Gastrocnemius medialis (tissue), 4 donors: ENCODE measurements at regions of chr1 and their contacts with region 1.

Region 1: DNA sequence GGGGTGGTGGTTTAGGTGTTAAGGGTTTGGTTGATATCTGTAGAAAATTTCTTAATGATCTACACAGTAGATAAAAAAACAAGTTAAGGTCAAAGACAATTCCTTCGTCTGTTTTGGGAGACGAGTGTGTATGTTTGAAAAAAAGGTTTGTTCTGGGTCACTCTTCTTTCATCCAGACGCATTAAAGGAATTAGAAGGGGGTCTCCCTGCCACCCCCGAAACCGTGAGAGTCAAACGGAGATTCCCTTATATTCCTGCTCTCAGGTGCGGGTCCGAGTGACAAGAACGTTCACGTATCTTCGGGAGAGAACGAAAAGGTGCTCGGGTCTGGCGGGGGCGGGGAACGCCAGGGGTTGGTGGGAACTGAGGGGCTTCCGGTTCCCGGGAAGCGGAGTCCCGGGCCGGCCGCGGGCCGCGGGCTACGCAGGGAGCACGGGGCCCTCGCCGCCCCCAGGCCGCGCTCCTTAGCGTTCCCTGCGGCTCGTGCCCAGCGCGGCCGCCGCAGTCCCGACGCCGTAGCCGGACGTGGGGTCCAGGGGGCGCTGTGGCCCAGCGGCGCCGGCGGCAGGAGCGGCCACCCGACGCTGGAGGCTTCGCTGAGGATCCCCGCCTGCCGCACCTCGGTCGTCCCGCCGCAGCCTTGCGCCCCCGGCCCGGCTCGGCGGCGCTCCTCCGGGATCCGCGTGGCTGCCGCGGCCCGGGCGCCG is at the start of gene ZFYVE9:
- DNase-seq: peak; percentile 32 to 59
- ATAC-seq: peak; percentile 81 to 84
- H3K4me3 ChIP-seq: peak within 1 kb of the TSS; percentile 65 to 94 (median 84)
- H3K27ac ChIP-seq: peak within 1 kb of the TSS; percentile 81 to 96 (median 93)
- H3K4me1 ChIP-seq: peaks cover 43 to 51% of the 10 kb centered on the region in 2 donors
- H3K27me3 ChIP-seq: no peaks in the 10 kb centered on the region
- CTCF ChIP-seq: peak in 4 of 5 experiments; percentile 88 to 94 (median 90)
- POLR2A ChIP-seq: peak; percentile 27 to 40
- total RNA-seq, gene ZFYVE9: 35.9 to 42.9 (median 41.9) TPM

Region 2: GRCh38 chr1:51990478-51990965 is 151.1 kb before region 1 on chr1 and contains the start of gene RAB3B:
- in situ Hi-C with region 1: no loop called
- intact Hi-C with region 1: no loop called
- DNase-seq: peak in 1 of 2 donors; percentile 12
- ATAC-seq: no peak
- H3K4me3 ChIP-seq: peak within 1 kb of the TSS in 3 of 4 donors; percentile 36 to 50 (median 37)
- H3K27ac ChIP-seq: no peak within 1 kb of the TSS
- H3K4me1 ChIP-seq: no peaks in the 10 kb centered on the region
- H3K27me3 ChIP-seq: peaks cover 38 to 42% (median 40%) of the 10 kb centered on the region in 3 donors
- CTCF ChIP-seq: no peak
- POLR2A ChIP-seq: no peak
- total RNA-seq, gene RAB3B: 0.02 to 0.04 TPM in 2 of 4 donors, not detected in the others

Region 3: DNA sequence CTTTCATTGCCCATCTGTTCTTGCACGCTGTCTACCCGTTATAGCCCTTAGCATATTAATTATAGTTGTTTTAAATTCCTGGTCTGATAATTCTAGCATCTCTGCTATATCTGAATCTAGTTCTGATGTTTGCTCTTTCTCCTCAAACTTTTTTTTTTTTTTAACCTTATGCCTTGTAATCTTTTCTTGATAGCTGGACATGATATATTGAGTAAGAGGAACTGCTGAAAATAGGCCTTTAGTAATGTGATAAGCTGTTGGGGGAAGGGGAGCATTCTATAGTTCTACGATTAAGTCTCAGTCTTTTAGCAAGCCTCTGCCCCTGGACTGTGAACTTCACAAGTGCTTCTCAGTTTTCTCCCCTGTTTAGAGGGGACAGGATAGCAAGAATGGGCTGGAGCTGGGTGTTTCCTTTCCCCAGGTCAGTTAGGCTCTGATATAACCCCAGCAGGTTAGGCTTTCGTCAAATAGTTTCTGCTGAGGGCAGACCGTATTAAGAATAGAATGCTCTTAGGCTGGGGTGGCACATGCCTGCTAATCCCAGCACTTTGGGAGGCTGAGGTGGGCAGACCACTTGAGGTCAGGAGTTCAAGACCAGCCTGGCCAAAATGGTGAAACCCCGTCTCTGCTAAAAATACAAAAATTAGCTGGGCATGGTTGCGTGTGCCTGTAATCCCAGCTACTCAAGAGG is 62.4 kb after region 1 on chr1:
- in situ Hi-C with region 1: no loop called
- intact Hi-C with region 1: loop called (anchors 1 kb)
- DNase-seq: no peak
- ATAC-seq: peak; percentile 94 to 96
- H3K4me3 ChIP-seq: peak overlapping the region in 3 of 4 donors; percentile 17 to 24 (median 24)
- H3K27ac ChIP-seq: peak overlapping the region; percentile 69 to 76 (median 73)
- H3K4me1 ChIP-seq: peaks cover 12 to 17% of the 10 kb centered on the region in 2 donors
- H3K27me3 ChIP-seq: no peaks in the 10 kb centered on the region
- CTCF ChIP-seq: no peak
- POLR2A ChIP-seq: no peak

Region 4: DNA sequence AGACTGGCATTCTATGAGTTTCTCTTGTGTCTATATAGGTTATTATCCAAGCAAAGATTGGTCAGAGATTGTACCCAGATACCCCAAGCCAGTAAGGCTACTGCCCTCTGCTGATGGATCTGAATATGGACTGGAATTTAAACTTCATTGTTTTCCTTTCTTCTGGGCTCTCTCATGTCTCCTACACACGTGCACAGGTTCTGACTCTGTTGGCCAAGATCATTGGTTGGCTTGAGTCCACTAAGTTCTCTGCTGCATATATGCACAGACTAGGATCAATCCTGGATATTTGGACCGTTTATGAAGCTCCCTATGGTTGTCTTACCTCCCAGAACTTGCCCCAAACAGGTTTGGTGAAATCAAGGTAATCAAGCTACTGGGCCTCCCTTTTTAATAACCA is 154.7 kb after region 1 on chr1:
- in situ Hi-C with region 1: no loop called
- intact Hi-C with region 1: loop called (anchors 1 kb)
- DNase-seq: no peak
- ATAC-seq: peak; percentile 69 to 88
- H3K4me3 ChIP-seq: no peak overlapping the region
- H3K27ac ChIP-seq: no peak overlapping the region
- H3K4me1 ChIP-seq: no peaks in the 10 kb centered on the region
- H3K27me3 ChIP-seq: no peaks in the 10 kb centered on the region
- CTCF ChIP-seq: peak; percentile 63 to 78 (median 73)
- POLR2A ChIP-seq: no peak

Region 5: GRCh38 chr1:52662645-52663313 is 521.1 kb after region 1 on chr1:
- in situ Hi-C with region 1: loop called in 1 of 4 experiments (anchors 25 kb)
- intact Hi-C with region 1: no loop called
- DNase-seq: no peak
- ATAC-seq: no peak
- H3K4me3 ChIP-seq: no peak overlapping the region
- H3K27ac ChIP-seq: peak overlapping the region in 2 of 4 donors; percentile 36 to 62
- H3K4me1 ChIP-seq: peaks cover 23 to 43% of the 10 kb centered on the region in 2 donors
- H3K27me3 ChIP-seq: no peaks in the 10 kb centered on the region
- CTCF ChIP-seq: no peak
- POLR2A ChIP-seq: no peak

Region 6: GRCh38 chr1:53293123-53293522 is 1151.5 kb after region 1 on chr1:
- in situ Hi-C with region 1: no loop called
- intact Hi-C with region 1: no loop called
- DNase-seq: peak in 1 of 2 donors; percentile 20
- ATAC-seq: peak; percentile 39 to 52
- H3K4me3 ChIP-seq: no peak overlapping the region
- H3K27ac ChIP-seq: no peak overlapping the region
- H3K4me1 ChIP-seq: peaks cover 4 to 7% of the 10 kb centered on the region in 2 donors
- H3K27me3 ChIP-seq: no peaks in the 10 kb centered on the region
- CTCF ChIP-seq: no peak
- POLR2A ChIP-seq: no peak